ENCODE measurements at regions of chr20 and their contacts with region 1.

Region 1: GRCh38 chr20:2713285-2713684 is 20.7 kb downstream of the EBF4 start:
- DNase-seq: no peak
- ATAC-seq: no peak
- H3K4me3 Mint-ChIP-seq: no peak overlapping the region
- H3K27ac Mint-ChIP-seq: no peak overlapping the region
- H3K4me1 Mint-ChIP-seq: no peaks in the 10 kb centered on the region
- H3K27me3 Mint-ChIP-seq: peaks cover 9% of the 10 kb centered on the region
- CTCF ChIP-seq: no peak

Region 2: DNA sequence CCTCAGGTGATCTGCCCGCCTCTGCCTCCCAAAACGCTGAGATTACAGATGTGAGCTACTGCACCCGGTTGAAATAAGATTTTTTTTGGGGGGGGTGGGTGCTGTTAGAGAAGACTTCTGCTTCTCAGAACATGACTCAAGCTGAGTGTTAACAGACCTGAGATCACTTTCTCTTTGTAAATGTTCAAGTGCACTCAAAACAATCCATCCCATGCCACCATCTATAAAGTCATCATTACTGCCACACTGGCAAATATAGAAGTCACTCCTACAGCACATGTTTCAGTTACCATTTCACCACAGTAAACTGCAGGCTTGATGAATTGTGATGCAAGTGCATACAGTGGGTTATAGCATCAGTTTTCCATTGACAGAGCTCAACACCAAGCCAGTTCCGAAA is 136.2 kb after region 1 on chr20:
- CTCF ChIA-PET with region 1: no interaction called
- POLR2A ChIA-PET with region 1: no interaction called
- intact Hi-C with region 1: loop called (anchors 1 kb)
- DNase-seq: no peak
- ATAC-seq: no peak
- H3K4me3 Mint-ChIP-seq: no peak overlapping the region
- H3K27ac Mint-ChIP-seq: no peak overlapping the region
- H3K4me1 Mint-ChIP-seq: peaks cover 11% of the 10 kb centered on the region
- H3K27me3 Mint-ChIP-seq: no peaks in the 10 kb centered on the region
- CTCF ChIP-seq: no peak

Measured in activated B cell treated with CpG ODN at 0.5 μM for 24 hours (primary cell).